CD4-positive, alpha-beta memory T cell (primary cell): ENCODE measurements at regions of chr19 and their contacts with region 1.

Region 1: DNA sequence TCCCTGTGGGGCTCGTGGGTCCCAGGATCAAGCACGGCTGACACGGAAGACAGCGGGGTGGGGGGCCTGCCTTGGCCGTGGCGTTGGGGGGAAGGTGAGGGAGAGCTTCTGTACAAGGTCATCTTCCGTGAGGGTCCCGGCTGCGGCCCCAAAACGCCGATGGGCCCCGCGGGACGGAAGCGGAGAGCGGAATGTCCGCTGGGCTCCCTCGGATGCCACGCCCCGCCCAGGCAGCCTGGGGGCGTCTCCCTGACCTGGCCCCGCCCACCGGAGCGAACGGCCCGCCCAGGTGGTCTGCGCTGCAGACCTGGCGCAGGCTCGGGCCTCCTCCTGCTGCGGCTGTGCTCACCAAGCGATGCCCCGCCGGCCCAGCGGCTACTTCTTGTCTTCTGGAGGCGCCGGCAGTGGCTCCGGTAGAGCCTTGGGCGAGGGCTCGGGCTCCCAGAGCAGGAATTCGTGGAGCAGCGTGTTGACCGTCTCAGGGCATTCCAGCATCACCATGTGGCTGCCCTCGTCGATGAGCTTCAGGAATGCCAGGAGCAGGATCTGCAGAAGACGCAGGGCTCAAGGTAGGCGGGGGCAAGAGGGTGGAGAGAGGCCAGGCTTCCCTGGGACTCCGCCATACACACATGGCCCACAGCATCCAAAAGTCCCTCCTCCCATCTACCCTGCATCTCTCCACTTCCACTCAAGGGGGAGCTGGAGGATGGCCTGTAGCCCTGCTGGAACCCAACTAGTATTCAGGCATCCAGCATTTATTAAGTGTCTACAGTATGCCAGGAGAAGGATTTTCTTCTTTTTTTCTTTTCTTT is 10.7 kb downstream of the ABHD8 start:
- DNase-seq: peak; percentile 77 to 85 (median 80)
- H3K4me3 ChIP-seq: peak overlapping the region; percentile 61 to 75
- H3K4me3 Mint-ChIP-seq: peak overlapping the region; percentile 88 to 92 (median 90)
- H3K27ac ChIP-seq: peak overlapping the region; percentile 20
- H3K27ac Mint-ChIP-seq: peak overlapping the region; percentile 47 to 89 (median 81)
- H3K4me1 ChIP-seq: peaks cover 6% of the 10 kb centered on the region
- H3K4me1 Mint-ChIP-seq: peaks cover 3 to 5% (median 4%) of the 10 kb centered on the region in 4 donors
- H3K27me3 ChIP-seq: no peaks in the 10 kb centered on the region
- H3K27me3 Mint-ChIP-seq: peaks cover 0 to 4% of the 10 kb centered on the region in 2 donors

Region 2: GRCh38 chr19:17346109-17346671 is 53.7 kb after region 1 on chr19:
- CTCF ChIA-PET with region 1: no interaction called
- POLR2A ChIA-PET with region 1: no interaction called
- intact Hi-C with region 1: loop called (anchors 1 kb)
- DNase-seq: peak in 4 of 5 donors; percentile 66 to 71 (median 68)
- H3K4me3 ChIP-seq: no peak overlapping the region
- H3K4me3 Mint-ChIP-seq: peak overlapping the region in 1 of 8 donors; percentile 29
- H3K27ac ChIP-seq: no peak overlapping the region
- H3K27ac Mint-ChIP-seq: peak overlapping the region in 1 of 7 donors; percentile 46
- H3K4me1 ChIP-seq: no peaks in the 10 kb centered on the region
- H3K4me1 Mint-ChIP-seq: peaks cover 5 to 7% (median 6%) of the 10 kb centered on the region in 4 donors
- H3K27me3 ChIP-seq: no peaks in the 10 kb centered on the region
- H3K27me3 Mint-ChIP-seq: peaks cover 10 to 11% of the 10 kb centered on the region in 2 donors